Prostate gland (tissue), 2 donors: ENCODE measurements at regions of chr1 and their contacts with region 1.

Region 1: DNA sequence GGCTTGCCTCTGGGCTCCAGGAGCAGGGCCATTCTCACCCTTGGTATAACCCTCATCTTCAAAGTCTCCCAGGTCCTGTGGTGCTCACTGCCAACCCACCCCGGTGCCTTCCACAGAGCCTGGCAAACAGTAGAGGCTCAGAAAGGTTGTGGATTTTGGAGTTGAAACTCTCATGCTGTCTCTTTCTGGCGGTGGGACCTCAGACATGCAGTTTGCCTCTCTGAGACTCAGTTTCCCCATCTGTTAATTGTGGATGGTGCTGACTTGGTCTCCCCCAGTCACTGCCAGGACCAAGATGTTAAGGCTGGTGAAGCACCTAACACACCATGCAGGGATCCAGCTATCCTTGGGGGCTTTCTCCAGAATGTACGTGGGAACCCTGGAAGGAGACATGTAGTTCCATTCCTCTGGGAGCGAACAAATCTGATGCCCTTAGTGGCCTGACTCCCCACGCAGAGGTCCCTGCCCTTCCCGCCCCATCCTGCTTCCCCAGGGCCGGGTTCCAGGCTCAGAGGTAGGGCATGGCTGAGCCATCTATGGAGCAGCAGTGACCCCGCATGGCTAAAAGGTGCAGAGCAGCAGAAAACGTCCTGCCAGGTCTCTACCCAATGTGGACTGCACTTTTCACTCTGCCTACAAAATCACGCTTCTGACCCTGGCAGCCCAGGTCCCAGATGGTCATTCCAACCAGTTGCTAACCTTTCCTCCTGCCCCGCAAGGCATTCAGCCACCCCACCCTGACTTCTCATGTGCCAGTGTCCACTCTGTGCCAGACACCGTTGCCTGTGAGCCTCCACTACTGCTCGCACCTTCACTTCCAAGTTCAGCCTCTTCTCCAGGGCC is 9.2 kb upstream of the TTC22 start:
- DNase-seq: peak; percentile 51
- H3K4me3 ChIP-seq: no peak overlapping the region
- H3K27ac ChIP-seq: no peak overlapping the region
- H3K4me1 ChIP-seq: no peaks in the 10 kb centered on the region
- H3K27me3 ChIP-seq: no peaks in the 10 kb centered on the region
- CTCF ChIP-seq: peak; percentile 57 to 84 (median 70)
- POLR2A ChIP-seq: no peak

Region 2: GRCh38 chr1:53860967-53861411 is 949.3 kb before region 1 on chr1:
- intact Hi-C with region 1: loop called (anchors 10 kb)
- DNase-seq: no peak
- H3K4me3 ChIP-seq: no peak overlapping the region
- H3K27ac ChIP-seq: no peak overlapping the region
- H3K4me1 ChIP-seq: no peaks in the 10 kb centered on the region
- H3K27me3 ChIP-seq: no peaks in the 10 kb centered on the region
- CTCF ChIP-seq: peak in 3 of 4 experiments; percentile 30 to 73 (median 56)
- POLR2A ChIP-seq: no peak

Region 3: DNA sequence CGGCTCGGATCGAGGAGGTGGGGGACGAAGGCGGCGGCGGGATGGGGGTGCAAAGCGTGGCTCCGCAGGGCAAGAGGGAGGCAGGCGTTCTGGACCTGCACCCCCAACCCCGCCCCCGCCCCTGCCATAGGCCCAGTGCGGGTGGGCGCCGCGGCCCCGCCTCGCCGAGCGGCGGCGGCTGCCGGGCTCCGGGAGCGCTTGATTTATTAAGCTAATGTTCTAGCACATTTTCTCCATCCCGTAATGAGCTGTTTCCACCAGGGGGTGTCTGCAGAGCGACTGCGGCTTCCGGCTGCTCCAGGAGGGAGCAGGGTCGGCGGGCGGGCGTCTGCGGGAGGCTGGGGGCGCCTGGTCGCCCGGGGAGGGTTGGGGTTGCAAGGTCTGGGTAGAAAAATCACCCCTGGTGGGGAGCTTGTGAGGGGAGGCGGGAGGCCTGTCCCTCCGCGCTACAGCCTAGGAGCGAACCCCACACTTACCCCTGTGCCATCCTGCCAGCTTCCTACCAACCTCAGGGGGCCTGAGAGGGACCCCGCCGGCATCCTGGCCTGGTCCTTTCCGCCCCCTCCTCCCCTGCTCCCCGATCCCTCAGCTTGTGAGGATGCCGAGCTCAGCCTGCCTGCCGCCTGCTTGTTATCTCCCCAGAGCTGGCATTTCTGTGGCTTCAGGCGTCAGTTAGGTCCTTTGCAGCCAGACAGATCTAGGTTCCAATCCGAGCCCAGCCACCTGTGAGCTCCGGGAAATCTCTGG is 310.8 kb before region 1 on chr1:
- intact Hi-C with region 1: loop called (anchors 5 kb)
- DNase-seq: peak; percentile 30
- H3K4me3 ChIP-seq: peak overlapping the region; percentile 15 to 35
- H3K27ac ChIP-seq: no peak overlapping the region
- H3K4me1 ChIP-seq: no peaks in the 10 kb centered on the region
- H3K27me3 ChIP-seq: no peaks in the 10 kb centered on the region
- CTCF ChIP-seq: peak in 2 of 4 experiments; percentile 44 to 56
- POLR2A ChIP-seq: no peak